ENCODE measurements at regions of chr3 and their contacts with region 1.

Region 1: DNA sequence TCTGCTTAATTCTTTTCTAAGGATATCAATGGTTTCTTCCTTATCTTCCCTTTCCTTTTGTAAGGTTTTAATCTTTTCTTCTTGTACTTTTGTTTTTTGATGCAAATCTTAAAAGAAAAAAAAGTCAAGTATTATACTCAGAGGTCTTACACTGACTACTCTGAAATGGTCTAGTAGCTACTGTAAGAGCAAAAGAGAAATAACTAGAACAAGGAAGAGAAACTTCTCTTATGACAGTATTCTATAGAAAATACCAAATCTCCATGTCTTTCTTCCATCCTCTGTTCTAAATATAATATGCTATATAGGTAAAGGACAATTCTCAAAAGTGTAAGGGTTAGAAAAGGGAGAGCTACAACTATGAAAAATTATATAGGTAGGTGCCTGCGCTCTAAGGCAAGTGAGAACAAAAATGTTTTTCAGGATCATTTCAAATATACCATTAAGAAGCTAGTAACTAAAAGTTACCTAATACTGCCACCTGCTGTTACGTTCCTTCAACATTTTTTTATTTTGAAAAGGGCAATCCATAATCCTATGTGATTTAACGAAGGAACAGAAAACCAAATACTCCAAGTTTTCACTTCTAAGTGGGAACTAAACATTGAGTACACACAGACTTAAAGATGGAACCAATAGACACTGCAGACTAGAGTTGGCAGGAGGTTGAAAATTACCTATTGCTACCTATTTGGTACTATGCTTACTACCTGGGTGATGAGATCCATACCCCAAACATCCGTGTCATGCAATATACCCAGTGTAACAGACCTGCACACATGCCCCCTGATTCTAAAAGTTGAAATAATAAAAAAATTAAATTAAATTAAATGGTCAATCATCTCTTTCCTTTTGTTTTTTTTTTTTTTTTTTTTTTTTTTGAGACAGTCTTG is 36.7 kb downstream of the CIP2A start:
- DNase-seq: no peak
- ATAC-seq: peak; percentile 71
- H3K4me3 ChIP-seq: no peak overlapping the region
- H3K27ac ChIP-seq: no peak overlapping the region
- H3K4me1 ChIP-seq: no peaks in the 10 kb centered on the region
- H3K27me3 ChIP-seq: no peaks in the 10 kb centered on the region
- CTCF ChIP-seq: peak; percentile 28 to 57 (median 30); a peak in 4 of 6 replicates
- EP300 ChIP-seq: no peak
- POLR2A ChIP-seq: no peak
- RAD21 ChIP-seq: peak; percentile 63

Region 2: DNA sequence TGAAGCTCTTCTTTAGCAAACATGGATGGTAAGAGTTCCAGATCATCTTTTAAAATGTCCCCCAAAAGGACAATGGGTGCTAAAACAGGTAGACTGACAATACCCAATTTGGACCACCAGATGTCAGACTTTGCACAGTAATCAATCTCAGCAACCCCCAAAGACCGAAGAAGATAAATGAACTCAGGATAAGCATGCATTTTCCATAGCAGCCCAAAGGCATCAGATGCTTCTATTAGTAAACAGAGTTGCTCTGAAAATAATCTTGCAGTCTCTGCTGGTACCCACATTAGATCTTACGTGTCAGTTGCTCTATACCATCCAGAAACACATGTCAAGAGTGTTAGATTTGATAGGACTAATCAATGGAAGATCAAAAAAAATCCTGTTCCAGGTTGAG is 62.7 kb before region 1 on chr3:
- CTCF ChIA-PET with region 1: interaction called, 113 read pairs
- POLR2A ChIA-PET with region 1: no interaction called
- RAD21 ChIA-PET with region 1: interaction called, 50 read pairs
- SMC1A ChIA-PET with region 1: interaction called, 98 read pairs
- in situ Hi-C with region 1: loop called (anchors 10 kb)
- intact Hi-C with region 1: loop called (anchors 1 kb)
- DNase-seq: peak; percentile 31
- ATAC-seq: peak; percentile 90
- H3K4me3 ChIP-seq: no peak overlapping the region
- H3K27ac ChIP-seq: no peak overlapping the region
- H3K4me1 ChIP-seq: no peaks in the 10 kb centered on the region
- H3K27me3 ChIP-seq: no peaks in the 10 kb centered on the region
- CTCF ChIP-seq: peak; percentile 69 to 79 (median 70)
- EP300 ChIP-seq: no peak
- POLR2A ChIP-seq: no peak
- RAD21 ChIP-seq: peak; percentile 97

Region 3: GRCh38 chr3:108505811-108506210 is 46.7 kb before region 1 on chr3:
- CTCF ChIA-PET with region 1: interaction called, 32 read pairs
- POLR2A ChIA-PET with region 1: no interaction called
- RAD21 ChIA-PET with region 1: interaction called, 11 read pairs
- SMC1A ChIA-PET with region 1: interaction called, 6 read pairs
- in situ Hi-C with region 1: no loop called
- intact Hi-C with region 1: no loop called
- DNase-seq: no peak
- ATAC-seq: no peak
- H3K4me3 ChIP-seq: no peak overlapping the region
- H3K27ac ChIP-seq: no peak overlapping the region
- H3K4me1 ChIP-seq: no peaks in the 10 kb centered on the region
- H3K27me3 ChIP-seq: no peaks in the 10 kb centered on the region
- CTCF ChIP-seq: peak in 1 of 3 experiments; percentile 24; a peak in 1 of 6 replicates
- EP300 ChIP-seq: no peak
- POLR2A ChIP-seq: no peak
- RAD21 ChIP-seq: no peak

Region 4: DNA sequence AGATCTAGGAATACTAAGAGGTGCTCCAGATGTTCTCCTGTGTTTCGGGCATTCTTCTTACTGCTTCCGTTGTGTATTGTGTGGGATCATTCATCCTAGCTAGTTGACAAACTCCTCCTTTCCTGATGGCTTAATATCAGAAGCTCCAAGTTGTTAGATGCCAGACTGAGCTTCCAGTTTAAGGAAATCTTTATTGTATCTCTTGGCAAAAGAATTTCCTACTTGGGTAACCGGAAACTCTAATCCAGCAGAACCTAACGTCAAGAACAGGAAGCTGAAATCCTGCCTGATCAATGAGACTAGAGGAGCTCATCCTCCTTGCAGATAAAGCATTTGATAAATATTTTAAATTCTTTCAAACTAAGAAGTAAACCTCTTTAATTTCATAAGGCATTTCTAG is 14.4 kb before region 1 on chr3:
- CTCF ChIA-PET with region 1: interaction called, 19 read pairs
- POLR2A ChIA-PET with region 1: no interaction called
- RAD21 ChIA-PET with region 1: interaction called, 11 read pairs
- SMC1A ChIA-PET with region 1: interaction called, 11 read pairs
- in situ Hi-C with region 1: no loop called
- intact Hi-C with region 1: no loop called
- DNase-seq: no peak
- ATAC-seq: no peak
- H3K4me3 ChIP-seq: no peak overlapping the region
- H3K27ac ChIP-seq: no peak overlapping the region
- H3K4me1 ChIP-seq: no peaks in the 10 kb centered on the region
- H3K27me3 ChIP-seq: no peaks in the 10 kb centered on the region
- CTCF ChIP-seq: no peak
- EP300 ChIP-seq: no peak
- POLR2A ChIP-seq: no peak
- RAD21 ChIP-seq: no peak

Region 5: DNA sequence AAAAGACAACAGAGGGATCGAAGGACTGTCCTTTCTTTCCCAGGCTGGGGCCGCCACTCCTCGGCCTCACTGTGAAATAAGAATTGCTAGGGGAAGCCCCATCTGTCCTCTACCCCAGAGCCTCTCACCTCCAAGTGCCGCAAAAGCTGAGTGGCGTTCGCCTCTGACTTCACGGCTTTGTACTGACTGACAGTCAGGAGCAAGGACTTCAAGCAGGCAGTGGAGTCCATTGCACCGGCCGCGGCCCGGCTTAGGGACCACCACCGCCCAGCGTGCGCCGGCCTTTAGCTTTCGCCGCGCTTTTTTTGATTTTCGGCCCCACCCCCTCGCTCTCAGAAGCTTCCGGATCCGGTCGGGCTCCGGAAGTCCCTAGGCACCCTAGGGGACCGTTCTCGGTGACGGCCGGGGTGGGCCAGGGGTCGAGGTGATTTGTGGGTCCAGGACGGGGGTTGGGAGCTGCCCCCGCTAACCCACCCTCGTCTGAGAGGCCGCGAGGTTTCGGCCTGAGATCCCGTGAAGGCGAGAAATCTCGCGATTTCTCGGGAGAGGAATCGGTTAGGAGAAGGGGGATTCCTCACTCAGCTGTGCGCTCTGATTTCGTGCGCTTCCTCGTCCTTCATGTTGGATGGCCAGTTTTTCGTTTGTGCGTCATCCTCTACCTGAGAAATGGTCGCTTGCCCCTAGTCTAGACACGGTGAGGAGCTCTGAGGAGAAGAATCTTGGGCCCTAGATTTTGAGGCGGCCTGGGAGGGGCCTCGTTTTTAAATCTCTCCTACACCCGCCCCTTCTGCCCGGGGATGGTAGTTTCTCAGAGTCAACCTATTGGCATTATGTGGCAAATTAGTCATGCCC is 36.9 kb after region 1 on chr3 and contains the starts of genes CIP2A and DZIP3:
- CTCF ChIA-PET with region 1: interaction called, 15 read pairs
- POLR2A ChIA-PET with region 1: no interaction called
- RAD21 ChIA-PET with region 1: interaction called, 3 read pairs
- SMC1A ChIA-PET with region 1: interaction called, 18 read pairs
- in situ Hi-C with region 1: no loop called
- intact Hi-C with region 1: no loop called
- DNase-seq: peak; percentile 85
- ATAC-seq: peak; percentile 93
- H3K4me3 ChIP-seq: peak within 1 kb of the TSS; percentile 80
- H3K27ac ChIP-seq: peak within 1 kb of the TSS; percentile 91
- H3K4me1 ChIP-seq: 0 out of 2 replicates have a peak, but pooled peaks cover 2% of the 10 kb centered on the region
- H3K27me3 ChIP-seq: no peaks in the 10 kb centered on the region
- CTCF ChIP-seq: no peak; a peak in 1 of 6 replicates
- EP300 ChIP-seq: no peak
- POLR2A ChIP-seq: peak; percentile 95
- RAD21 ChIP-seq: no peak
- polyA plus RNA-seq, gene CIP2A: 12.5 to 18.8 TPM
- polyA plus RNA-seq, gene DZIP3: 4.3 to 7.8 TPM

Region 6: GRCh38 chr3:108767253-108767652 is 214.7 kb after region 1 on chr3:
- CTCF ChIA-PET with region 1: no interaction called
- POLR2A ChIA-PET with region 1: no interaction called
- RAD21 ChIA-PET with region 1: no interaction called
- SMC1A ChIA-PET with region 1: no interaction called
- in situ Hi-C with region 1: no loop called
- intact Hi-C with region 1: no loop called
- DNase-seq: no peak
- ATAC-seq: no peak
- H3K4me3 ChIP-seq: no peak overlapping the region
- H3K27ac ChIP-seq: no peak overlapping the region
- H3K4me1 ChIP-seq: no peaks in the 10 kb centered on the region
- H3K27me3 ChIP-seq: no peaks in the 10 kb centered on the region; a peak in 1 of 4 replicates
- CTCF ChIP-seq: no peak
- EP300 ChIP-seq: no peak
- POLR2A ChIP-seq: no peak
- RAD21 ChIP-seq: no peak

Region 7: GRCh38 chr3:109112946-109113760 is 560.6 kb after region 1 on chr3:
- CTCF ChIA-PET with region 1: no interaction called
- POLR2A ChIA-PET with region 1: no interaction called
- RAD21 ChIA-PET with region 1: no interaction called
- SMC1A ChIA-PET with region 1: no interaction called
- in situ Hi-C with region 1: no loop called
- intact Hi-C with region 1: no loop called
- DNase-seq: no peak
- ATAC-seq: no peak
- H3K4me3 ChIP-seq: no peak overlapping the region
- H3K27ac ChIP-seq: no peak overlapping the region
- H3K4me1 ChIP-seq: no peaks in the 10 kb centered on the region
- H3K27me3 ChIP-seq: no peaks in the 10 kb centered on the region; a peak in 1 of 4 replicates
- CTCF ChIP-seq: no peak
- EP300 ChIP-seq: no peak
- POLR2A ChIP-seq: no peak
- RAD21 ChIP-seq: no peak